GM18951 (cell line): ENCODE measurements at regions of chrX and their contacts with region 1.

Region 1: GRCh38 chrX:136711147-136711546 is 63.2 kb downstream of the CD40LG start:
- POLR2A ChIP-seq: no peak

Region 2: GRCh38 chrX:136268051-136269048 is 442.8 kb before region 1 on chrX:
- in situ Hi-C with region 1: no loop called
- POLR2A ChIP-seq: no peak

Region 3: GRCh38 chrX:136920001-136920400 is 208.9 kb after region 1 on chrX:
- in situ Hi-C with region 1: loop called (anchors 10 kb)
- POLR2A ChIP-seq: no peak